K562 (cell line): ENCODE measurements at regions of chr9 and their contacts with region 1.

Region 1: GRCh38 chr9:105414947-105415661 is 32.7 kb upstream of the FSD1L start:
- DNase-seq: peak; percentile 61 to 74 (median 73)
- ATAC-seq: peak; percentile 91
- H3K4me3 ChIP-seq: no peak overlapping the region
- H3K27ac ChIP-seq: no peak overlapping the region
- H3K4me1 ChIP-seq: no peaks in the 10 kb centered on the region
- H3K27me3 ChIP-seq: peaks cover 0 to 4% of the 10 kb centered on the region in 2 experiments; a peak in 1 of 5 replicates
- CTCF ChIP-seq: peak; percentile 71 to 87 (median 84)
- EP300 ChIP-seq: no peak
- POLR2A ChIP-seq: no peak
- RAD21 ChIP-seq: peak; percentile 95 to 98

Region 2: GRCh38 chr9:104787306-104788015 is 627.6 kb before region 1 on chr9:
- CTCF ChIA-PET with region 1: interaction called, 11 read pairs
- POLR2A ChIA-PET with region 1: no interaction called
- in situ Hi-C with region 1: no loop called
- intact Hi-C with region 1: loop called (anchors 2 kb)
- DNase-seq: no peak
- ATAC-seq: no peak
- H3K4me3 ChIP-seq: no peak overlapping the region
- H3K27ac ChIP-seq: no peak overlapping the region
- H3K4me1 ChIP-seq: peaks cover 0 to 6% of the 10 kb centered on the region in 2 experiments; a peak in 1 of 5 replicates
- H3K27me3 ChIP-seq: peaks cover 3 to 10% of the 10 kb centered on the region in 2 experiments; a peak in 3 of 5 replicates
- CTCF ChIP-seq: no peak
- EP300 ChIP-seq: no peak
- POLR2A ChIP-seq: no peak
- RAD21 ChIP-seq: no peak

Region 3: DNA sequence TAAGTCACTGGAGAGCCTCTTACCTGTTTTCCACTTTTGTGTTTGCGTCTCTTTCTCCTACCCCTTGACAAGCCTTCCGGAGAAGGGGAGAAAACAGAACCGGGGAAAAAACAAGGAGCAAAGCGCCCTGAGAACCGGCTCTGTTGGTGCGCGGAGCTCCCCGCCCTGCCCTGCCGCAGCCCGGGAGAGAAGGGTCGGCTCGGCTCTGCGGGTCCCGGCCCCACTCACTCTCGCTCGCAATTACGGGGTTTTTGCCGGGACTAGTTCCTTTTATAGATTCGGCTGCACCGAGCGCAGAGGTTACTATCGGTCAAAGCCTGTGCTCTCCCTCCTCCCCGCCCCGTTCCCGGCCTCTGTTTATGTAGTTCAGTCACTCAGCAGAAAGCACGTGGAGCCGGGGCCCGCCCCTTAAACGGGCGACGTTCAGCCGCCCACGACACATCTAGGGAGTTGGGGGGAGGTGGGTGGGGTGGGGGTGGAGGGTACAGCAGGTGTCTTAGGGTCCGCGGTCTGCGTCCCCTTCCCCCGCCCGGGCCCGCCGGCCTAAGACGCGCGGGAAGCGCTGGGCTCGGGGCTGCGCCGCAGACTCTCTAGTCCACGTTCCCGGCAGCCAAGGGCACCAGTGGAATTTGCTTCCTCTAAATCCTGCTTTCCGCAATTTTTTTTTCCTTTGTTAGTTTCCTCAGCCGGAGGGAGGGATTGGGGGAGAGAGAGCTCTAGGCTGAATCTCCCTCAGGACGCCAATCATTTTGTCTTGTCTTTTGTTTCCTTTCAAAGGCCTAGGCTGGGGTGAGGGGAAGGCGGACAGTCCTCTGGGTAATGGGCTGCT is 487.0 kb before region 1 on chr9 and contains the start of gene ABCA1:
- CTCF ChIA-PET with region 1: no interaction called
- POLR2A ChIA-PET with region 1: no interaction called
- in situ Hi-C with region 1: no loop called
- intact Hi-C with region 1: loop called (anchors 2 kb)
- DNase-seq: peak; percentile 32 to 48 (median 35)
- ATAC-seq: peak; percentile 69
- H3K4me3 ChIP-seq: no peak within 1 kb of the TSS
- H3K27ac ChIP-seq: no peak within 1 kb of the TSS
- H3K4me1 ChIP-seq: peaks cover 0 to 16% of the 10 kb centered on the region in 2 experiments; a peak in 2 of 5 replicates
- H3K27me3 ChIP-seq: peaks cover 3 to 32% of the 10 kb centered on the region in 2 experiments; a peak in 3 of 5 replicates
- CTCF ChIP-seq: no peak
- EP300 ChIP-seq: no peak
- POLR2A ChIP-seq: no peak
- RAD21 ChIP-seq: no peak
- polyA plus RNA-seq, gene ABCA1: under 0.01 to 0.01 TPM

Region 4: GRCh38 chr9:105026451-105026850 is 388.7 kb before region 1 on chr9:
- CTCF ChIA-PET with region 1: no interaction called
- POLR2A ChIA-PET with region 1: no interaction called
- in situ Hi-C with region 1: no loop called
- intact Hi-C with region 1: no loop called
- DNase-seq: no peak
- ATAC-seq: no peak
- H3K4me3 ChIP-seq: no peak overlapping the region
- H3K27ac ChIP-seq: no peak overlapping the region
- H3K4me1 ChIP-seq: no peaks in the 10 kb centered on the region
- H3K27me3 ChIP-seq: peaks cover 0 to 11% of the 10 kb centered on the region in 2 experiments; a peak in 1 of 5 replicates
- CTCF ChIP-seq: no peak
- EP300 ChIP-seq: no peak
- POLR2A ChIP-seq: no peak
- RAD21 ChIP-seq: no peak

Region 5: DNA sequence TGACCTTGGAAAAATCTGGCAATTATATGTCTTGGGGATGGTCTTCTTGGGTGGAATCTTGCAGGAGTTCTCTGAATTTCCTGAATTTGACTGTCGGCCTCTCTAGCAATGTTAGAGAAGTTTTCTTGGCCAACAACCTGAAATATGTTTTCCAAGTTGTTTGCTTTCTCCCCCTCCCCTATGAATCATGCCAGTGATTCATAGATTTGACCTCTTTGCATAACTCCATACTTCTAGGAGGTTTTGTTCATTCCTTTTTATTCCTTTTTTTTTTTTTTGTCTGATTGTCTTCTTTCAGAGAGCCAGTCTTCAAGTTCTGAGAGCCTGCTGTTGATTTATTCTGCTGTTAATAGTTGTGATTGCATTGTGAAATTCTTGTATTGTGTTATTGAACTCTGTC is 227.3 kb before region 1 on chr9:
- CTCF ChIA-PET with region 1: no interaction called
- POLR2A ChIA-PET with region 1: no interaction called
- in situ Hi-C with region 1: no loop called
- intact Hi-C with region 1: loop called (anchors 5 kb)
- DNase-seq: no peak
- ATAC-seq: no peak
- H3K4me3 ChIP-seq: no peak overlapping the region
- H3K27ac ChIP-seq: no peak overlapping the region
- H3K4me1 ChIP-seq: no peaks in the 10 kb centered on the region
- H3K27me3 ChIP-seq: peaks cover 3 to 25% of the 10 kb centered on the region in 2 experiments; a peak in 3 of 5 replicates
- CTCF ChIP-seq: no peak
- EP300 ChIP-seq: no peak
- POLR2A ChIP-seq: no peak
- RAD21 ChIP-seq: no peak

Region 6: DNA sequence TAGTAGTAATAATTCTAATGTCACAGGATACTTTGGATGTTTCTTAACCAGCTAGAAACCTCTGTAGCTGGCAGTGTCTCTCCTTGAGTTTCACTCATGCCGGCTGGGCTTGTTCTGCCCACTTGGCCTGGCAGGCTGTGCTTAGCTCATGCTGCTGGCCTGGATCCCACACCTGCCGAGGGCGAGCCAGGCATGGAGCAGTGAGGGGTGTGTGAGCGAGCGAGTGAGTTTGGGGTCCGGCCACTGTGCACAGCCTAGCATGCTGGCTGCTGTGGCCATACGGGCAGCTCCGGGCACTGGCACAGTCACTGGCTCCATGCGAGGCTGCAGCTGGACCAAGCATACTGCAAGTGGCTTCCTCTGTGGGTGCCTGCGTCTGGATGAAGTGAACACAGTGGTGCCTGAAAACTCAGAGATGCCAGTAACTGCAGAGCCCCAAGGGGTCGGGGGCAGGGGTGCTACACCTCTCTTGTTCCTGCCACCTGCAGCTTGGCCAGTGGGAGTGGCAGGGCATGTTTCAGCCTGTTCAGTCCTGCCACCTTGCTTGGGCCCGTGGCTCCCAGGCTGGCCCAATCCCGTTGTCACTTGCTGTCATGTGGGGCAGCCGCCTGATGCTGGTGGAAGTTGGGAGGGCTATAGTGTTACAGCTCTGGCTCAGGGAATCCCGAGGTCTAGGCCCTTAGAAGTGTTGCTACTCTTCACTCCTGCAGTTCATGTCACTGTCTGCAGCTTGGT is 42.6 kb after region 1 on chr9:
- CTCF ChIA-PET with region 1: no interaction called
- POLR2A ChIA-PET with region 1: no interaction called
- in situ Hi-C with region 1: no loop called
- intact Hi-C with region 1: no loop called
- DNase-seq: no peak
- ATAC-seq: no peak
- H3K4me3 ChIP-seq: no peak overlapping the region
- H3K27ac ChIP-seq: no peak overlapping the region
- H3K4me1 ChIP-seq: peaks cover 11 to 20% of the 10 kb centered on the region in 2 experiments
- H3K27me3 ChIP-seq: no peaks in the 10 kb centered on the region
- CTCF ChIP-seq: no peak
- EP300 ChIP-seq: no peak
- POLR2A ChIP-seq: no peak
- RAD21 ChIP-seq: no peak

Region 7: DNA sequence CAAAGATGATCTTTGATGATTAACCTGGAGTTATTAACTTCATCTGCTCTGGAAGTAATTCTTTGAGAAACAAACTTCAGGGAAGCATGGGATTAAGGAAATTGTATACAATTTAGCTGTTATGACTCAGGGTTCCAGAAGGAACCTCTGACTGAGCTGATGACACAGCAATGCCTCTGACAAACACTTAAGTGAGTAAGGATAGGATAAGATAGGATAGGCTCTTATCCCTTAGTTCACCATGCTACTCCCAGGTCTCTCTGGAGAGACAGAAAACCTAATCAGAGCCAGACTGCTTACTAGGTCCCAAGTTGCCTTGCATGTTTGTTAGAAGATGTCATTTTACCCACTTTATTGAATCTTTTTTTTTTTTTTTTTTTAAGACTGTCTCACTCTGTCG is 266.6 kb after region 1 on chr9:
- CTCF ChIA-PET with region 1: no interaction called
- POLR2A ChIA-PET with region 1: no interaction called
- in situ Hi-C with region 1: no loop called
- intact Hi-C with region 1: no loop called
- DNase-seq: peak; percentile 68 to 85 (median 76)
- ATAC-seq: peak; percentile 96
- H3K4me3 ChIP-seq: no peak overlapping the region
- H3K27ac ChIP-seq: no peak overlapping the region; the same call in 2 of the 3 replicates
- H3K4me1 ChIP-seq: peaks cover 0 to 19% of the 10 kb centered on the region in 2 experiments; a peak in 2 of 5 replicates
- H3K27me3 ChIP-seq: no peaks in the 10 kb centered on the region
- CTCF ChIP-seq: no peak
- EP300 ChIP-seq: peak; percentile 80
- POLR2A ChIP-seq: no peak
- RAD21 ChIP-seq: no peak